ENCODE measurements at regions of chr12 and their contacts with region 1.

Region 1: GRCh38 chr12:57583008-57583831 is 7.8 kb upstream of the PIP4K2C start:
- DNase-seq: peak; percentile 75
- ATAC-seq: peak; percentile 95

Region 2: DNA sequence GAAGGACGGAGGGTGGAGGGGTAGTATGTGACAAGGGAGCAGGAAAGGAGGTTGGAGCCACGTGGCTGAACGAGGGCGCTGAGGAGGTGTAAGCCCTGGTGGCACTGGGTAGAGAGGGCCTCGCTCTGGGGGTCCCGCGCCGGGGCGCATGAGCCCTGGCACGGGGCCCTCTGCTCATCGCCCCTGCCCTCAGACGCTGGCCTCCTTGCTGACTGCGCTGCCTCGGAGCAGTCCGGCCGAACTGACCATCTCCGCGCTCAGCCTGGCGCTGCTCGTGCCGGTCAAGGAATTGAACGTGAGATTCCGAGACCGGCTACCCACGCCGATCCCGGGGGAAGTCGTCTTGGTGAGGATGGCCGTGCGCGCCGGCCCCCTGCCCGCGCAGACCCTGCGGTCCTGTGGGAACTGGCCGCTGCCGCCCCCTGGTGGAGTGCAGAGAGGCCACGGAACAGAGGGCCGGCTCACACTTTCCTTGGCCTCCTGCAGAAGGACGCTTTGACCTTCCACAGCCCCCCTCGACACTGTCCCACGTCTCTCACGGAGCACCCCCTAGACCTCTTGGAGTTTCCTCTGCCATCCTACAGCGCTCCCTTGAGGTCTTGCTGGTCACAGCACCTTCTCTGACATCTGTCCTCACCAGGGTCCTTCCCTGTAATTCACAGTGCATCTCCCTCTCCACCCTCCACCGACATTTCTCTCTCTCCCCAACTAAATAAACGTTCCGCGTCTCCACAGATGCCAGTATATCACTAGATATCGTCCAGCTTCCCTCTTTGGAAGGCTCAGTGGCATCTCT is 38.5 kb after region 1 on chr12:
- intact Hi-C with region 1: loop called (anchors 5 kb)
- DNase-seq: peak; percentile 80
- ATAC-seq: peak; percentile 80

Region 3: DNA sequence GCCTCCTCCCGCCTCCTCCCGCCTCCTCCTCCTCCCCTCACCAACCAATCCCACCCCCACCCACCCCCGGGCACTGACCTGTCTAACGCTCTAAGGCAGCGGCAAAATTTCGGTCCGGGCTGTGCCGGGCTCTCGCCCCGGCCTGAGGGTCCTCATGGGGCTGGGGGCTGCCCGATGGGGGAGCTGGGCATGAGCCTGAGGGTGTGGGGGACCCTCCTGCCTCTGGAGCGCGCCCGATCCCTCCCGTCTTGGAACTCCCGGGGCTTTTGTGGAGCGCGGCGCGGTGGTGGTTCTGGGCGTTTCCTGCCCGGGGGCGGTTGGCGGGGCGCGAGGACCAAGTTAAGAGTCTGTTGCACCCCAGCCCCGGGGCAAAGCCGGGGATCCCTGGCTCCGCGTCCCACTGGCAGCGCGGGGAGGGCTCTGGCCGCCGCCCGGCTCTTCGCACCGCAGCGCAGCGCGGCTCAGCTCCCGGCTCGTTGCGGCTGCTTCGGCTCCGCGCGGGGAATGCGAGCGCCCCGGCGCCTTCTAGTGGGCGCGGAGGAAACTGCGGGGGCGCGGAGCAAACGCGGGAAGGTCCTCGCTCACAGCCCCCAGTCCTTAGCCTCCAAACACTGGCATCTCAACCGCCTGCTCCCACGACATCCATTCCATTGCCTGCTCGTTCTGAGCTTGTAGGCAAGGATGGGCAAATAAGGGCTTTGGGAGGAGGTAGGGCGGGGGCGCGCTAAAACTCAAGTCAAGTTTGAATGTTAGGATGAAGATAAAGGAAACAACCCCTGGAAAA is 49.7 kb after region 1 on chr12 and contains the start of gene B4GALNT1:
- intact Hi-C with region 1: loop called (anchors 1 kb)
- DNase-seq: peak; percentile 70
- ATAC-seq: peak; percentile 77
- total RNA-seq, gene B4GALNT1: 16.6 TPM

Measured in sciatic nerve (tissue), 2 donors.